ENCODE measurements at regions of chr16 and their contacts with region 1.

Region 1: DNA sequence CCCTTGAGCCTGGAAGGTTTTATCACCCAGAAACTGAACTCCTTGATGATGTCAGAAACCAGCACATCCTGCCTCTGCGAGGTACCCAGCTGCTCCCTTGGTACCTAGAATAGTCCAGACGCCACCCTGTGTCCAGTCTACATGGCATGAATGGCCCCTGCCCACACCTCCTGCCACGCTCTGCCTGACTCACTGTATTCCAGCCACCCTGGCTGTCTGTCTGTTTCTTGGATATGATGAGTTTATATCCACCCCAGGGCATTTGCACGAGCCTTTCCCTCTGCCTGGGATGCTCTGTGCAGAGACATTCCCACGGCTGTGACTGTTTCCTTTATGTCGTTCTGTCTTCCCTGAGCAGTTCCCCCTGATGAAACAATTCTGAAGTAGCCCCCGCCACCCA is 68.7 kb downstream of the CRISPLD2 start:
- DNase-seq: no peak
- H3K4me3 ChIP-seq: no peak overlapping the region
- H3K27ac ChIP-seq: no peak overlapping the region
- H3K4me1 ChIP-seq: no peaks in the 10 kb centered on the region
- H3K27me3 ChIP-seq: no peaks in the 10 kb centered on the region
- CTCF ChIP-seq: no peak
- POLR2A ChIP-seq: no peak

Region 2: DNA sequence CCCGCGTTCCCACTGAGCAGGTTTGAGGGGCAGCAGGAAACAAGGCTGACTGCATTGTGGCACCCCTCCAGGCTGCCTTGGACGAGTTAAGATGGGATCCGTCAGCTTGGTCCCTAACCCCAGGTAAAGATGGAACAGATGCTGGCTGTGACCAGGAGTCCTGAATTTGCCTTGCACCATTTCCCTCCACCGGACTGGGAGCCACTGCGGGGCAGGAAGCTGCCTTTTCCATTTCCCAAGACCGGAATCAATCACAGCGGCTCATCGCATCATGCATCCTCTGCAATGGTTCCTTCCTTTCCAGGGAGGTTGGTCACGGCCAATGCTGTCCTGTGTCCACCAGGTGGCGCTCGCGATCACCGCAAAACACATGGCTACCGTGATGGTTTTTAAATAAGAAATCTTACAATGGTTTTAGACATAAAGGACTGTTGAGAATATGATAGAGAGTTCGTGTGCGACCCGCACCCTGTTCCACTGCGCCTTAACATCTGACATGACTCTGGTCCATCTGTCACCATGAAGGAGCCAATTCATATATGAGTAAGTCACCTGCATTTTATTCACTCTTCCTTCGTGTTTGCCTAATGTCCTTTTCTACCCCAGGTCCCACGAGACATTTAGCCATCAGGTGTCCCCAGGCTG is 377.1 kb before region 1 on chr16:
- intact Hi-C with region 1: no loop called
- DNase-seq: peak; percentile 76 to 90
- H3K4me3 ChIP-seq: peak overlapping the region in 1 of 3 donors; percentile 16
- H3K27ac ChIP-seq: no peak overlapping the region
- H3K4me1 ChIP-seq: no peaks in the 10 kb centered on the region
- H3K27me3 ChIP-seq: no peaks in the 10 kb centered on the region
- CTCF ChIP-seq: peak; percentile 91 to 94 (median 94)
- POLR2A ChIP-seq: no peak

Region 3: DNA sequence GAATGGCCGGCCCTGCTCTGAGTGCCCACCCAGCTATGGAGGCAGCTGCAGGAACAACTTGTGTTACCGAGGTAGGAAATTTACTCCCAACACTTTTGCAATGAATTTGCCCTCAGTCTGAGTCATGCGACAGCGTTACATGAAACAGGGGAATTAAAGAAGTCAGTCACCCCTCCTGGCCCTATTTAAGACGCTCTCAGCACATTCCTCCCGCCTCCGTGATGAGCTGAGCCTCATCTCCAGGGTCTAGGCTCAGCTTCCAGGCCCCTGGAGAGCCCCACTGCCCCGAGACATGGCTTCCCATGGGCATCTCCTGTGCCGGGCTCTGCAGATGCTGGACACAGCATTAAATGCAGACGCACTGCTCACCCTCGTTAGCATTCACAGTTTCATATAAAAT is 33.7 kb before region 1 on chr16:
- intact Hi-C with region 1: no loop called
- DNase-seq: no peak
- H3K4me3 ChIP-seq: no peak overlapping the region
- H3K27ac ChIP-seq: peak overlapping the region in 1 of 2 donors; percentile 26
- H3K4me1 ChIP-seq: no peaks in the 10 kb centered on the region
- H3K27me3 ChIP-seq: no peaks in the 10 kb centered on the region
- CTCF ChIP-seq: no peak
- POLR2A ChIP-seq: no peak

Region 4: DNA sequence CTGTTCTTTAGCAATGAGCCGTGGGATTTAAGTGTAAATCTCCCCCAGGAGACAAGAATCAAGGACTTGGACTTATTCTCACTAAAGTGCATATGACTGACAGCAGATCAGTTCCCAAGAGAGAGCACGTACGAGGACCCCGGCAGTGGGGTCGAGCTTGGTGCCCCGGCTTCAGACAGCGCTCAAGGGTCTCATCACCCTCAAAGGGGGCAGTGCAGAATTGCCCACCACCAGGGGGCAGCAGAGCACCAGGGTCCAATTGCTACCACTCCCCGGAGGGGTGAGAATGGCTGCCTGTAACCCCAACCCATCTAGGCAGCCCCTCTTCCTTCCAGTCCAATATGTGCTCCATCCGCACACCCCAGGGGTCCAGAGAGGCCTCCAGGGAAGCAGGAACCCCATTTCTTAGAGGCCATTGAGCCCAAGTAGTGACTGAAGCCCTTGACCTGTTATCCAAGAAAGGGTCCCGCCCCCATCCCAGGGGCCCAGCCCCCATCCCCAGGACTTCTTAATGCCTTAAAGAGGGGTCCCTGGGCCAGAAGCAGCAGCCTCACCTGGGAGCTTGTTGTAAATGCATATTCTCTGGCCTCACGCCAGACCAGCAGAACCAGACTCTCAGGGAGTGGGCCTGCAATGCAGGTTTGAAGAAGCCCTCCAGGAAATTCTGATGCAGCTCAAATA is 36.8 kb after region 1 on chr16:
- intact Hi-C with region 1: no loop called
- DNase-seq: no peak
- H3K4me3 ChIP-seq: no peak overlapping the region
- H3K27ac ChIP-seq: no peak overlapping the region
- H3K4me1 ChIP-seq: peaks cover 0 to 3% of the 10 kb centered on the region in 2 donors
- H3K27me3 ChIP-seq: no peaks in the 10 kb centered on the region
- CTCF ChIP-seq: peak; percentile 40 to 61 (median 56)
- POLR2A ChIP-seq: no peak

Region 5: GRCh38 chr16:85084841-85085510 is 196.5 kb after region 1 on chr16:
- intact Hi-C with region 1: loop called (anchors 2 kb)
- DNase-seq: no peak
- H3K4me3 ChIP-seq: no peak overlapping the region
- H3K27ac ChIP-seq: no peak overlapping the region
- H3K4me1 ChIP-seq: no peaks in the 10 kb centered on the region
- H3K27me3 ChIP-seq: no peaks in the 10 kb centered on the region
- CTCF ChIP-seq: no peak
- POLR2A ChIP-seq: no peak